Posterior vena cava (tissue), 2 donors: ENCODE measurements at regions of chr11 and their contacts with region 1.

Region 1: DNA sequence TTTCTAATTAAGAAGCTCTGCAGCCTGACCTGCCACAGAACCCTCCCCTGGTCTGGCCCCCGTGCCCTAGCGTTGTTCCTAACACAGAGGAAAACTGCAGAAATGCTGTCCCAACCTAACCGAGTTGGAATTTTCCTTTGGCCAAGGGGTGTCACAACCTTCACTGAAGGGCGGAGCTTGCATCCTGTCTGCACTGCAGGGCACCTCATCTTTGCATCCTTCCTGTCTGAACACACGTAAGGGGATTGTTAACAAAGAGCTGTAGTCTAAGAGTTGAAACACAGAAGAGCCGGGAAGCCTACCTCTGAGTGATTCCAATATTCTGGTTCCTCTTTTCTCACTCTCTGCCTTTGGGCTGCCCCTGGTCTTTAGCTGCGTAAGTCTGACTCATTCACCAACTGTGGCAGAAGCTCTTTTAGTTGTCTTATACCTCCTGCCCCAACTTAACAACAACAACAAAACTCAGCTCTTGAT is 1.6 kb downstream of the DIXDC1 start:
- DNase-seq: peak; percentile 63

Region 2: DNA sequence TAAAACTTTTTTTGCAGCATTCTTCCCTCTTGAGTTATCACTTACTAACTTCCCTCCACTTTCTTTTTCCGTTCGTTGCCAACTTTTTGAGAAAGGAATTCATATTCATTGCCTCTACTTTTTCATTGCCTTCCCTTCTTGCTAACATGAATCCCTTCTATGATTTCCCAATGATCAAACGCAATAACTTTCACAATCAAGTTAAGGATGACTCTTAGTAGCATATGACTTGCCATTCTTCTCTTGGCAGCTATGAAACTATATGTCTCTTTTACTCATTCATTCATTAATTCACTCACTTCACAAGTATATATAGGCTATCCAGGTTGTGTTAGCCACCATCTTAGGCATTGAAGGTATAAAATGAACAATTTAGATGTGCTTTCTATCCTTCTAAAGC is 1209.8 kb before region 1 on chr11:
- intact Hi-C with region 1: loop called in 1 of 2 experiments (anchors 5 kb)
- DNase-seq: no peak

Region 3: GRCh38 chr11:111977146-111978027 is 38.7 kb after region 1 on chr11:
- intact Hi-C with region 1: loop called in 1 of 2 experiments (anchors 5 kb)
- DNase-seq: peak; percentile 91